Activated naive CD8-positive, alpha-beta T cell treated with anti-CD3 and anti-CD28 coated beads, Interleukin-2, amount 10 ng/mL, durations not matched to agents 7 days and 5 days (primary cell): ENCODE measurements at regions of chr15 and their contacts with region 1.

Region 1: GRCh38 chr15:34969340-34970097 is at the start of gene AQR:
- DNase-seq: peak; percentile 85
- ATAC-seq: peak; percentile 95
- H3K4me3 Mint-ChIP-seq: peak within 1 kb of the TSS; percentile 95
- H3K27ac Mint-ChIP-seq: peak within 1 kb of the TSS; percentile 87
- H3K4me1 Mint-ChIP-seq: peaks cover 22% of the 10 kb centered on the region
- H3K27me3 Mint-ChIP-seq: no peaks in the 10 kb centered on the region
- total RNA-seq, gene AQR: 35.3 to 36.2 TPM

Region 2: DNA sequence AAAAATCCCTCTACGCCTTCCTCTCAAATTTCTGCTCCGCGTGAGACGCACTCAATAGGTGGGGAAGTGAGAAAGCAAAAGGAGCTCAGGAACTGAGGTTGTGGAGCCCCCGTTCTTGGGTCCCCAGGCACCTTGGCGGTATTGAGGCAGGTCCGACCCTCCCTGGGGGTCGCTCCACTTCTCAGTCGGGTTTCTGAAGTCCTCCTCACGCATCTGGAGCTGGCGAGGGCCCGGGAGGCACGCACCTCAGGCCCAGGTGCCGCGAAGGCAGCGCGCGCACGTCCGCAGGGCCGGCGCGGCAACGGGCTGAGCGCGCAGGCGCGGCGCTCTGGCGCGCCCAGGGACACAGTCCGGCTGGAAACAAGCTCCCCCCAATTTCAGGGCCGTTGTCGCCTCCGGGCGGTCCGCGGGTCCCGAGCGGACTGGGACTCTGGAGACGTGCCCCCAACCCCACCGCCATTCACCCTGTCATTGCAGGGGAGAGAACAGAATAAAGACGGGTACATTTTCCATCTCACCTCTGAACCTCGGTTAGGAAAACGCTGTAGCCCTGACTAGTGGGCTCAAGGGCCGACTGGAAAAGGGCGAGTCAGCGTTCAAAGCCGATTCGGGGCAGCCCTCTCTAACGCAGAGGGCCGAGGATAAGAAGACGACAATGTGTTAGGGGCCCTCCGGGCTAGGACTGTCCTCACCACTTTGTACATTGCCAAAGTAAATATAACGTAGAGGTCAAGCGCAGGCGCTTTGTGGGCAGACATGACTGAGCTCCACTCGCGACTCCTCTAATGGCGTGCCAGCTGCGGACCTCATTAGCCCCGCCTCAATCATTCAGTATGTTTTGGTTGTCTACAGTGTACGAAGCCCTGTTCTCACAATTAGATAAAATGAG is 18.7 kb after region 1 on chr15 and contains the start of gene ZNF770:
- POLR2A ChIA-PET with region 1: interaction called, 85 read pairs
- DNase-seq: peak; percentile 92
- ATAC-seq: peak; percentile 89
- H3K4me3 Mint-ChIP-seq: peak within 1 kb of the TSS; percentile 94
- H3K27ac Mint-ChIP-seq: peak within 1 kb of the TSS; percentile 95
- H3K4me1 Mint-ChIP-seq: peaks cover 25% of the 10 kb centered on the region
- H3K27me3 Mint-ChIP-seq: no peaks in the 10 kb centered on the region
- total RNA-seq, gene ZNF770: 43.3 to 50.2 TPM

Region 3: GRCh38 chr15:35067496-35068347 is 98.2 kb after region 1 on chr15:
- POLR2A ChIA-PET with region 1: no interaction called
- DNase-seq: no peak
- ATAC-seq: no peak
- H3K4me3 Mint-ChIP-seq: no peak overlapping the region
- H3K27ac Mint-ChIP-seq: no peak overlapping the region
- H3K4me1 Mint-ChIP-seq: no peaks in the 10 kb centered on the region
- H3K27me3 Mint-ChIP-seq: peaks cover 5% of the 10 kb centered on the region